Activated CD8-positive, alpha-beta T cell treated with anti-CD3 and anti-CD28 coated beads, Interleukin-2, amount 10 ng/mL, durations not matched to agents 7 days and 5 days (primary cell): ENCODE measurements at regions of chr1 and their contacts with region 1.

Region 1: GRCh38 chr1:110338886-110339406 is at the start of gene RBM15:
- DNase-seq: peak; percentile 99
- ATAC-seq: peak; percentile 82
- H3K4me3 Mint-ChIP-seq: no peak within 1 kb of the TSS
- H3K27ac Mint-ChIP-seq: no peak within 1 kb of the TSS
- H3K4me1 Mint-ChIP-seq: peaks cover 52% of the 10 kb centered on the region
- H3K27me3 Mint-ChIP-seq: no peaks in the 10 kb centered on the region
- total RNA-seq, gene RBM15: 72.0 to 75.5 TPM

Region 2: DNA sequence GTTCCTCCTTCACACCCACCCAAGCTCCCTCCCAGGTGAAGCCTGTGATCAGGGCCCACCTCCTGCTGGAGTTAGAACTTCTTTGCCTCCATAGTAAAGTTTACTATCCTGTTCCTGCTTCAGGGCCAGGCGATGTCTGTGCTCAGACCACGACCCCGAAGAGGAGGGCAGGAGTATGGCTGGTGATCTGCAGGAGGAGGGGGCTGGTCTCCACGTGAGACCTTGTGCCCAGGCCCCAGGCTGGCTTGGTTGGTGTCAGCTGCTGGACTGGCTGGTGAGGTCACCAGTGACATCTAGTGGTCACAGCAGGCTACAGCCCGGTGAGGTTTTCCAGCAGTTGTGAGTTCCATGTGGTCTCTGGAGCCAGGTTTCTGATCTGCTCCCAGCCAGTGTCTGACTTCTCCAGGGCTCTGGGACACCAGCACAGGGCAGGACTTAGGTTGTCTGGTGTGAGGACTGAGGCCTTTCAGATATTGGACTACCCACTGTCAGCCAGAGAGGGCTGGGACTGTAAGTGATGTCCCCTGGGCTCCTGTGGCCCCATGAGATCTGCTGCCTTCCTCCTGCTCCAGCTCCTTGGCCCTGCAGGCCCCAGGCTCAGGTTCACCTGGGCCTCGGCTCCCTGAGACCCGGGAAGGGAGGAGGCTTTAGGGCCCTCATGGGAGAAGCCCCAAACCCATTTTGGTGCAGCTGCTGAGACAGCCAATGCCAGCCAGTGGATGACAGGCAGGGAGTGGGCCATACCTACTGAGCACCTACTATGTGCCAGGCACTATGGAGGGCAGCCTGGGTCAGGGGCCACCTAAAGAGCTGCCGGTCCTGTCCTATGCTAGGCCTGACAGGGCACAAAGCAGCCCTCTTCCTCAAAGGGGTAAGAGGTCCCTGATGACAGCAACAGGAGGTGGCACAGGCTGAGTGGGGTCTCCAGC is 232.7 kb before region 1 on chr1:
- CTCF ChIA-PET with region 1: no interaction called
- POLR2A ChIA-PET with region 1: no interaction called
- DNase-seq: peak; percentile 70
- ATAC-seq: peak; percentile 77
- H3K4me3 Mint-ChIP-seq: no peak overlapping the region
- H3K27ac Mint-ChIP-seq: no peak overlapping the region
- H3K4me1 Mint-ChIP-seq: no peaks in the 10 kb centered on the region
- H3K27me3 Mint-ChIP-seq: peaks cover 8% of the 10 kb centered on the region

Region 3: DNA sequence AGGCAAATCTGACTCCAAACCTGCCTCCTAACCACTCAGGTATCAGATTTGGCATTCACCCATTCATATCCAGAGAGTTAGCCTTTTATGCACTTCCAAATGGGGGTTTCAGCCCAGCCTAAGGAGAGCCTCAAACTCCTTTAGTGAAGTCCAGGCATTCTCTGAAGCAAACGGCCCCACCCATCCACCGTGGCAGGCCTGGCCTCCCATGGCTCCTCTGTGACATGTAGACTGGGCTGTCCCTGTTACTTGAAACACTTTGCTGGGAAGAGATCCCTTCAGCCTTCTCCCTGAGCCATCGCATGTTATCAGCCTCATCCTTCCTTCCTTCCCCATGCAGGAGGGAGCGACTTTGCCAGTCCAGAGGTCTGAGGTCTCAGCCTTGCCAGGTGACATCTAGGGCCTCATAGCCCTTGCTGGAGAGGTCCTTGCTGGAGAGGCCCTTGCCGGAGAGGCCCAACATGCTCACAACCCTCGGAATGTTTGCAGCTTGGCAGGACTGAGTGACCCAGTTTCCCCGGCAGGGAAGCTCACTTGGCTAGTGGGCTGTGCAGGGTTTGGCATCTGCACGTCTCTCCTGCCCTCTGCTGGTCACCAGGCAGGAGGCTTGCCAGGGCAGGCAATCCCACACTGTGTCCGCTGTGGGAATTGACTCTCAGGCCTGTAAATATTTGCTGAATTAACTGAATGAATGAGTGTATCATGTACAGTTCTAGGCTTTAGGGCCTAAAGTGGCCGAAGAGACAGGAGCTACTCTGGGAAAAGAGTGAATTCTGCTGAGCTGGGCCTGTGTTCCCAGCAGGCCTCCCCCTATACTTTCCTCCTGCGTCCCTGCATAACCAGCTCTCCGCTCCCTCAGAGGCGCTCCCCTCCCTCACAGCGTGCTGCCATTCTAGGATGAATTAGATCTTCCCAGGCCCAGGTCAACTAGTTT is 26.5 kb before region 1 on chr1:
- CTCF ChIA-PET with region 1: interaction called, 15 read pairs
- POLR2A ChIA-PET with region 1: interaction called, 7 read pairs
- DNase-seq: peak; percentile 76
- ATAC-seq: peak; percentile 97
- H3K4me3 Mint-ChIP-seq: no peak overlapping the region
- H3K27ac Mint-ChIP-seq: no peak overlapping the region
- H3K4me1 Mint-ChIP-seq: no peaks in the 10 kb centered on the region
- H3K27me3 Mint-ChIP-seq: no peaks in the 10 kb centered on the region

Region 4: DNA sequence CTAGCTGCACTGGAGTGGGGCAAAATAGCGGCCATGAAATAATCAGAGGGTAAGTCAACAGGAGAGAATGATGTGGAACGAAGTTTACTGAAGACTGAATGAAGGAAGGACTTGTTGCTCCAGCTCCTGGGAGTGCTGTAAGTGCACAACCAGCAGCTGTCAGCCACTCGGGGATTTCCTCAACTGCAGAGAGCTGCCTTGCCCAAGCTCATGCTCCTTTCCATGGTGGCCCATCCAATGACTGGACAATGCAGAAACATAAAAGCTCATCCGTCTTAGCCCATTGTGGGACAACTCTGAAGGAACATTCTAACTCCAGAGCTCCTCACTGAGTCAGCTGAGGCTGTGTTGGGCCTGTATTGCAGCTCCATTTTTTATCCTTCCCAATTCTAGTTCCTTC is 20.9 kb before region 1 on chr1:
- CTCF ChIA-PET with region 1: interaction called, 15 read pairs
- POLR2A ChIA-PET with region 1: interaction called, 7 read pairs
- DNase-seq: no peak
- ATAC-seq: no peak
- H3K4me3 Mint-ChIP-seq: no peak overlapping the region
- H3K27ac Mint-ChIP-seq: no peak overlapping the region
- H3K4me1 Mint-ChIP-seq: no peaks in the 10 kb centered on the region
- H3K27me3 Mint-ChIP-seq: no peaks in the 10 kb centered on the region

Region 5: DNA sequence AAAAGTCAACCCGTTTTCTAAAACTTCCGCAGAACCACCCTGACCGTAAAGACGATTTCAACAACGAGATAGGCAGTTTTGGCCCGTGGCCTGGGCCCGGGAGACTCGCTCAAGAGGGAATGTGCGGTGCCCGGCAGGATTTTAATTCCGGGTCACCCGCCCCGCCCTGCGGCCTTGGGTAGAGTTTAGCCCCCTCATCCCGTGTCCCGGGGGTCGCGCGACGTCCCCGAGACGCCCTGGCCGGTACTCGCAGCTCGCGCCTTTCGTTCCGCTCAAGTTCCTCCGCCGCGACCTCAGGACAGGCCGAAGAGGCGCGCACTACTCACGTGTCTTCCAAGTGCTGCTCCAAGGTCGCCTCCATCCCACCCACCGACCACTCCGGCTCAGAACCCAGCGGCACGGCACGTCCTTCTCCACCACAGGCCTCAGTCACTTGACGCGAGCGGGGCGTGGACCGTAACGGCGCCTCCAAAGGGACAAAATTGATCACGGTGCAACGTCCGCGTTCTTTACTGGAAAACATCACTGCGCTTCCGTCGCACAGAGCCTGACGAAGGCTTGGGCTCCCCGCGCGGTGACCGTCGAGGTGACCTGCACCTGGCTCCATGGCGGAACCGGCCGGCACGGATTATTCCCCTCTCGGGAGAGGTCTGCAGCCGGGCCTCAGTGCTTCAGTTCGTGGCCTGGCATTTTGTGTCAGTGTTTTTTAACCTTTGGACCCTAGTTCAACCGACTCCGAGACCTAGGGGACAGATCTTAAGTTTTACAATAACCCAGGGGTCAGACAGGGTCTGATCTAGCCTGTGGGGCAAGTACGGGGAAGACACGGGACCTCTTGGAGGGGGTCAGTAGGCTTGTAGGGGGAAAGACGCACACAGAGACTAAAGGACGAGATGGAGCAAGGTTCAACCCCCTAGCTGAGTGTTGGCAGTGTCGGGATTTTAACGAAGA is 68.6 kb after region 1 on chr1 and contains the start of gene LAMTOR5:
- CTCF ChIA-PET with region 1: interaction called, 8 read pairs
- POLR2A ChIA-PET with region 1: interaction called, 39 read pairs
- DNase-seq: peak; percentile 96
- ATAC-seq: peak; percentile 93
- H3K4me3 Mint-ChIP-seq: peak within 1 kb of the TSS; percentile 100
- H3K27ac Mint-ChIP-seq: peak within 1 kb of the TSS; percentile 100
- H3K4me1 Mint-ChIP-seq: peaks cover 28% of the 10 kb centered on the region
- H3K27me3 Mint-ChIP-seq: no peaks in the 10 kb centered on the region
- total RNA-seq, gene LAMTOR5: 123 TPM